Esophagus muscularis mucosa (tissue), 4 donors: ENCODE measurements at regions of chr11 and their contacts with region 1.

Region 1: GRCh38 chr11:130894322-130895025 is 21.8 kb downstream of the SNX19 start:
- DNase-seq: no peak
- H3K4me3 ChIP-seq: no peak overlapping the region
- H3K27ac ChIP-seq: peak overlapping the region; percentile 87 to 94 (median 88)
- H3K4me1 ChIP-seq: peaks cover 38 to 89% (median 85%) of the 10 kb centered on the region in 4 donors
- H3K27me3 ChIP-seq: no peaks in the 10 kb centered on the region
- CTCF ChIP-seq: peak; percentile 88 to 96 (median 91)
- EP300 ChIP-seq: no peak
- POLR2A ChIP-seq: no peak

Region 2: GRCh38 chr11:130314750-130315285 is 579.7 kb before region 1 on chr11 and contains the start of gene ZBTB44:
- intact Hi-C with region 1: loop called (anchors 10 kb)
- DNase-seq: peak; percentile 98
- H3K4me3 ChIP-seq: peak within 1 kb of the TSS; percentile 74 to 98 (median 89)
- H3K27ac ChIP-seq: peak within 1 kb of the TSS; percentile 94 to 96 (median 96)
- H3K4me1 ChIP-seq: peaks cover 26 to 41% (median 36%) of the 10 kb centered on the region in 4 donors
- H3K27me3 ChIP-seq: no peaks in the 10 kb centered on the region
- CTCF ChIP-seq: no peak
- EP300 ChIP-seq: no peak
- POLR2A ChIP-seq: no peak
- total RNA-seq, gene ZBTB44: 50.4 to 86.4 (median 65.3) TPM

Region 3: DNA sequence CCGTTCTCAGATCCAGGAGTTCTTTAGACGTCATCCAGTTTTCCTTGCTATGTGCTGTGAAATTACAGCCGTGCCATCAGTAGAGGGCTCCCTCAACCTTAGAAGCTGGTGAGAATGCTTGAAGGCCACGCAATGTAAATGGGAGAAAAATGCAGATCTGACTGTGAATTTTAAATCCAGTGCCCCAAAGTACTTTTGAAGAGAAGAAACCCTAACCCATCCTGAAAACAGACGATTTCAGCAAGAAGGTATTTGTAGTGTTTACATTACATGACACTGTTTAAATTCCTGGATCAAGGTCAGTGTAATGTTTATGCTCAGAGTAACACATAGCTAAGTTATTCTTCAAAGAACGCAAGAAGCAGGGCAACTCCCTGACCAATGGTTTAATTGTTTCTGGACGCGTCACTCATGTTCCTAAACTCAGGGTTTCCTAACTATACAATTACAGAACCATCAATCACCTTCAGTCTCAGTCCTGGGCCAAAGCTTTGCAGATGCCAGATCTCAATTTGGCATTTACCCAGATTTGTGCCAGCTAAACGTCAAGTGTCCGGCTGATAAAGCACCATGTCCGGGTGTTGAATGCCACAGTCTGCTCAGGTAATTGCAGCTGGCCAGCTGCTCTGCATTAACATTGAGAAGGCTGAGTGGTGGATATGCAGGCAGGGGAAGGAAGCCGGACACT is 504.3 kb before region 1 on chr11:
- intact Hi-C with region 1: loop called (anchors 2 kb)
- DNase-seq: no peak
- H3K4me3 ChIP-seq: no peak overlapping the region
- H3K27ac ChIP-seq: peak overlapping the region; percentile 67 to 83 (median 78)
- H3K4me1 ChIP-seq: peaks cover 8 to 45% (median 41%) of the 10 kb centered on the region in 4 donors
- H3K27me3 ChIP-seq: no peaks in the 10 kb centered on the region
- CTCF ChIP-seq: peak; percentile 51 to 65 (median 58)
- EP300 ChIP-seq: peak; percentile 85
- POLR2A ChIP-seq: no peak

Region 4: DNA sequence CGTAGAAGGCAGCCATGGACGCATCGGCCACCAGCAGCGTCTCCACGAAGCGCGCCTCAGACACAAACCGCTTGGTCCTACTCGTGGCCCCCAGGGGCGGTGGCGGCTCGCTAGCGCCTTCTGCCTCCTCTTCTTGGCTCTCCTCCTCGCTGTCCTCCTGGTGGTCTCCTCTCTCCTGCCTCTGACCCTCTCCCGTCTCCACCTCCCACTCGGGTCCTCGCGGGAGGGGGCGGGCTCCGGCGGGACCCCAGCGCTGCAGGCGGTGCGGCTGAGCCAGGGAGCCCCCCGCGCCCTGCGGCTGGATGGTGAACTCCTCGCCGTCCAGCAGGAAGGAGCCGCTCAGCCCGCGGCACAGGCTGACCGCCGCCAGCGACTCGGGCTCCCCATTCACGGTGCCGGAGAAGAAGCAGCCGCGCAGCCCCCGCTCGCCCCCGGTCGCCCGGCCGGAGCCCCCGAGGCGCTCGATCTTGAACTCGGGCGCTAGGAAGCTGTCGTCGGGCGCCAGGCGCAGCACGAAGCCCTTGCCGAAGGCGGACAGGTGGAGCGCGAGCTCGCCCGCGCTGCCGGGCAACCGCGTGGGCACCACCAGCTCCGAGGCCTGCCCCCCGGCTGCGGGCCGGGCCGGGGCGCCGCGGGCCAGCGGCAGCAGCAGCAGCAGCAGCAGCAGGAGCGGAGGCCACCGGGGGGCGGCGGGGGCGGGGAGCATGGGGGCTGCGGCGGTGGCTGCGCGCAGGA is 466.7 kb before region 1 on chr11:
- intact Hi-C with region 1: loop called (anchors 1 kb)
- DNase-seq: no peak
- H3K4me3 ChIP-seq: peak overlapping the region; percentile 61 to 74 (median 64)
- H3K27ac ChIP-seq: peak overlapping the region; percentile 57 to 78 (median 68)
- H3K4me1 ChIP-seq: peaks cover 21 to 53% (median 49%) of the 10 kb centered on the region in 4 donors
- H3K27me3 ChIP-seq: peaks cover 0 to 19% (median 0%) of the 10 kb centered on the region in 4 donors
- CTCF ChIP-seq: peak; percentile 37 to 45 (median 41)
- EP300 ChIP-seq: no peak
- POLR2A ChIP-seq: no peak

Region 5: GRCh38 chr11:130601141-130601540 is 293.3 kb before region 1 on chr11:
- intact Hi-C with region 1: no loop called
- DNase-seq: peak; percentile 95
- H3K4me3 ChIP-seq: no peak overlapping the region
- H3K27ac ChIP-seq: peak overlapping the region; percentile 24 to 73 (median 68)
- H3K4me1 ChIP-seq: peaks cover 34 to 51% (median 42%) of the 10 kb centered on the region in 4 donors
- H3K27me3 ChIP-seq: no peaks in the 10 kb centered on the region
- CTCF ChIP-seq: no peak
- EP300 ChIP-seq: no peak
- POLR2A ChIP-seq: no peak

Region 6: GRCh38 chr11:130861902-130862860 is 32.3 kb before region 1 on chr11:
- intact Hi-C with region 1: loop called (anchors 5 kb)
- DNase-seq: peak; percentile 96
- H3K4me3 ChIP-seq: peak overlapping the region; percentile 16 to 36 (median 26)
- H3K27ac ChIP-seq: peak overlapping the region in 2 of 4 donors; percentile 38 to 40
- H3K4me1 ChIP-seq: peaks cover 19 to 43% (median 38%) of the 10 kb centered on the region in 4 donors
- H3K27me3 ChIP-seq: no peaks in the 10 kb centered on the region
- CTCF ChIP-seq: peak in 2 of 3 experiments; percentile 100
- EP300 ChIP-seq: no peak
- POLR2A ChIP-seq: no peak

Region 7: DNA sequence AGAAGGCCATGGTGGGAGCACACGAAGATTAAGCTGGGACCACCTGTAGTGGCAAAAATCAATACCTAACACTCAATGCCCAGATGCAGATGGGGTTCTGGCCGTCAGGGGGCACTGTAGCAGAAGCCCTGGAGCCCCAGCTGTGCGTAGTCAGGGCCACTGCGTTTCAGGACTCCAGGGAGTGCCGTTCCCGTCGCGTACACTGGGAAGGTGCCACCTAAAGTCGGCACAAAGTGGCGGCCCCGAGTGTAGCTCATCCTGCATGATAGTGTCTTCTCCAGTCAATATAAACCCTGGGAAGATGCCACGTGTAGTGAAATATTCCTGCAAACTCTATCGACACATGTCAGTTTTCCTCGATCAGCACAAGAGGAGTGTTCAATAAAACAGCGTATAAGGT is 352.2 kb after region 1 on chr11:
- intact Hi-C with region 1: no loop called
- DNase-seq: peak; percentile 81
- H3K4me3 ChIP-seq: no peak overlapping the region
- H3K27ac ChIP-seq: no peak overlapping the region
- H3K4me1 ChIP-seq: peaks cover 0 to 16% (median 12%) of the 10 kb centered on the region in 4 donors
- H3K27me3 ChIP-seq: no peaks in the 10 kb centered on the region
- CTCF ChIP-seq: no peak
- EP300 ChIP-seq: no peak
- POLR2A ChIP-seq: no peak